Endothelial cell of umbilical vein (primary cell): ENCODE measurements at regions of chr22 and their contacts with region 1.

Region 1: DNA sequence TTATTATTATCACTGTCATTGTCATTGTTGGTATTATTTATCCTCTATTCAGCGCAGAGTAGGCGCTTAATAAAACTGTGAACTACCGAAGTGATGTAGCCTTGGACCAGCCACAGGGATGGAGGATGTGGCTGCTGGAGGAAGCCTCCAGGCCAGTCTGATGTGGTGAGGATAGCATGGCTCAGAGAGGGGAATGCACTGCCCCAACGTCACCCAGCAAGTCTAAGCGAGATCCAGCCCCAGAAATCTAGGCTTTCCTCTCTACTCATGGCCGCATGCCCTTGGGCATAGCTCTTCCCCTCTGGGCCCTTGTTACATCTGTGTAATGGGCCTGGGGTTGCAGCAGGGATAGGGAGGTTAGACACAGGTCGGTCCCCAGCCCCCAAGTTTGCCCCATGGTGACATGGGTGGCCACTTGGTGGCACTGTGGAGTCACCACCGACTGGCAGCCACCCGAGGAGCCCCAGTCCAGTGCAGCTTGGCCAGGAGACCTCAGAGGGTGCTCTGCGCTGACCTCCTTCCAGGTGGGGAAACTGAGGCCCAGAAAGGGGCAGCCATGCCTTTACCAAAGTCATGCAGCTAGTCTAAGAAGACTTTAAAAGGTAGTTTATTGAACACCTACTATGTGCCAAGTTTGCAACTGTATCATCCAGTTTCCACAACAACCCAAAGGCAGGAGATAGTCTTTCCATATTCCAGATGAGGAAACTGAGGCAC is 395.7 kb downstream of the MN1 start:
- DNase-seq: peak; percentile 43
- H3K4me3 ChIP-seq: no peak overlapping the region
- H3K27ac ChIP-seq: no peak overlapping the region
- H3K4me1 ChIP-seq: no peaks in the 10 kb centered on the region
- H3K27me3 ChIP-seq: peaks cover 0 to under 1% of the 10 kb centered on the region in 2 experiments
- CTCF ChIP-seq: peak; percentile 81 to 85
- POLR2A ChIP-seq: no peak

Region 2: DNA sequence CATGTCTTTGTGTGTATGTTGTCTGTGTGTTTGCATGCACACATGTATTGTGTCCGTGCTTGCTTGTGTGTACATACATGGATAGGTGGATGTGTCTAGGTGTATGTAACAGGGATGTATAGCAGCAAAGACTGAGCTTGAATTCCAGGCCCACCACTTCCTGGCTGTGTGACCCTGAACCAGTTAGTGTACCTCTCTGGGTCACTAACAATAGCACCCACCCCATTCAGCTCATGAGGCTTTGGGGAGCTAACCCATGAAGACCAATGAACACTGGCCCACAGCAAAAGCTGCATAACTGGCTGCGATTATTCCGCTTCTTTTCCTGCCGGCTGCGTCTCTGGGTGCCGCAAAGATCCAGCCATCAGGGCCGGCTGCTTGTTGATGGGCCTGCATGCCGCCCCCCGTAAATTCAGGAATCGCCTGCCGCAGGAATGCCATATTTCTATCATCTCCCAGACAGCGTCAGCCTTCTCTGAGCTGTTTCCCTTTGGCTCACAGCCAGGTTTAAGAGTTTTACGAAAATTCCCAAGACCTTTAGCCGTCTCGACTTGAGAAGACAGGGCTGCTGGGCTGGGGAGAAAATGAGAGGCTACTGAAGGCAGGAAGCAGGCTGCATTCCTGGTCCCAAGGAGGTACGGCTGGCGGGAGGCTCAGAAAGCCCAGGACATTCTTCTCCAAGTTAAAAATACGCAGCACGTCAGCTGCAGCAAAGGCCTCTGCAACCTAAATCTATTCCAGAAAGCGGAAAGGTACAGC is 171.2 kb after region 1 on chr22:
- CTCF ChIA-PET with region 1: no interaction called
- POLR2A ChIA-PET with region 1: no interaction called
- dilution Hi-C with region 1: no loop called
- intact Hi-C with region 1: loop called (anchors 5 kb)
- DNase-seq: peak; percentile 96
- H3K4me3 ChIP-seq: no peak overlapping the region
- H3K27ac ChIP-seq: peak overlapping the region; percentile 68
- H3K4me1 ChIP-seq: peaks cover 13% of the 10 kb centered on the region
- H3K27me3 ChIP-seq: no peaks in the 10 kb centered on the region
- CTCF ChIP-seq: no peak
- POLR2A ChIP-seq: no peak

Region 3: DNA sequence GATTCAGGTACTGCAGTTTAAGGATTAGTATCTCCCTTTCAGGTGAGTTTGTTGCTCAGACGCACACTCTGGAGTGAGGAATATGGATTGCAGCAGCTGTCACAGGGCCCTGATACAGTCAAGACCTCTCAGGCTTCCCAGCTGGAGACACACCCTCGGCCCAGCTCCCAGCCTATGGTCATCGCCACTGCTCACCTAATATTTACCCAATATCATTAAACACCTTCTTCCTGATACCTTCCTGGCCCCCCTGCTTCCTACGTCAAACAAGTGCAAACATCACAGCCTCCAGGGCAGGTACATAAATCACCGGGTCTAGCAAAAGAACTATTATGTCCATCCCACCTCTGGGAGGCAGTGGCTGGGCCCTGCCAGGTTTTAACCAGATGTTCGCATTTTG is 182.4 kb after region 1 on chr22:
- CTCF ChIA-PET with region 1: no interaction called
- POLR2A ChIA-PET with region 1: no interaction called
- dilution Hi-C with region 1: no loop called
- intact Hi-C with region 1: no loop called
- DNase-seq: no peak
- H3K4me3 ChIP-seq: no peak overlapping the region
- H3K27ac ChIP-seq: no peak overlapping the region
- H3K4me1 ChIP-seq: no peaks in the 10 kb centered on the region
- H3K27me3 ChIP-seq: peaks cover 4 to 8% of the 10 kb centered on the region in 2 experiments
- CTCF ChIP-seq: no peak
- POLR2A ChIP-seq: no peak